ENCODE measurements at regions of chr6 and their contacts with region 1.

Region 1: DNA sequence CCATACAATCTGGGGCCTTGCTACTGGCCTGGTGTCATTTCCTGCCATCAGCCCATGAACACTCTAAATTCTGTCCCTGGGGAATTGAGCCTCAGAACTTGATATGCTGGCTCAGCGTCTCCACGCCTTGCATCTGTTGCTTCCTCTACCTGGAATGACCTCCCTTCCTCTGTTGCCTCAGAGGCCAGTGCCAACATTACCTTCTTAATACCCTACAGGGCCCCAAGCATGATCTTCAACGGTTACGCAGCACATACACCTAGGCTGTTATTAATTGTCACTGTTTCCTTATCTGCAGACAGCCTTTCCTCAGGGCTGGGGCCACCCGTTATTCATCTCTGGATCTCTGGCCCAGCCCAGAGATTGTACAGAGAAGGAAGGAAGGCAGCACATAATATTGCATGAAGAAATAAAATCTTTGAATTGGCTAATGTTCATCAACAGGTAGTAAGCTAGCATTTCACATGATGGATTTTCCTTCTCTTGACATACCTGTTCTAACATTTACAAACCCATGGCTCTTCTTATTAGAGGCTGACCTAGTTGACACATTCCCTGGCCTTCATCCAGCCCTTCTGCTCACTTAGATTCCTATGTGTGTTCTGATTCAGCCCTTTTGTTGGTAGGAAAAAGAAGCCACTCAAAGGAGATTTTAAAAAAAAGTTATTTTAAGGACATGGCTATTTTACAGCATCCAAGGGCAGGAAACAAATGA is 8.4 kb upstream of the RNF182 start:
- DNase-seq: no peak
- ATAC-seq: no peak

Region 2: GRCh38 chr6:14144678-14145113 is 228.3 kb after region 1 on chr6:
- intact Hi-C with region 1: loop called (anchors 5 to 10 kb)
- DNase-seq: peak; percentile 67
- ATAC-seq: peak; percentile 62 to 86

Region 3: DNA sequence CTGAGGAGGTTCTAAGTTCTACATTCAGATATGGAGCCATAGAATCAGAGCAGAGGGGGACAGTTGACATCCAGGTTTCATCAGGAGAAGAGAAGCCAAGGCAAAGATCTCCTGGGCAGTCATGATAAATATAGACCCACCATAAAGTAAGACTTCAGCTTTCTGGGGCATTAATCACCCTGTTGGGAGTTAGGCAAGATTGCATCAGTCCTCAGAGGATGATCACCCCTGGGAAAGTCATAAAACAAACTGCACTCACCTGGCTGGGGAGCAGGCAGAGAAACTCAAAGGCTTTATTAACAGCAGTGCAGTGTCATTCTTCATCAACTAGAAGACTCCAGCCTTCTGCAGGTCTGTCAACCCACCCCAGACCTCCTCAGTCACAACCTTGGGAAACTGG is 1028.2 kb after region 1 on chr6:
- intact Hi-C with region 1: no loop called
- DNase-seq: no peak
- ATAC-seq: no peak

Measured in left cardiac atrium (tissue), 4 donors.